ENCODE measurements at regions of chr17 and their contacts with region 1.

Region 1: GRCh38 chr17:48804925-48805411 is 12.1 kb downstream of the TTLL6 start:
- DNase-seq: peak; percentile 44 to 79 (median 58)
- ATAC-seq: peak; percentile 89
- H3K4me3 ChIP-seq: no peak overlapping the region
- H3K4me3 Mint-ChIP-seq: no peak overlapping the region
- H3K27ac ChIP-seq: no peak overlapping the region
- H3K27ac Mint-ChIP-seq: no peak overlapping the region
- H3K4me1 ChIP-seq: peaks cover 4% of the 10 kb centered on the region
- H3K4me1 Mint-ChIP-seq: no peaks in the 10 kb centered on the region
- H3K27me3 ChIP-seq: peaks cover 0 to 8% of the 10 kb centered on the region in 2 experiments
- H3K27me3 Mint-ChIP-seq: peaks cover 23% of the 10 kb centered on the region
- CTCF ChIP-seq: peak; percentile 98

Region 2: GRCh38 chr17:48671697-48672171 is 133.2 kb before region 1 on chr17:
- CTCF ChIA-PET with region 1: interaction called, 3 read pairs
- POLR2A ChIA-PET with region 1: no interaction called
- intact Hi-C with region 1: loop called in 1 of 2 experiments (anchors 5 kb)
- DNase-seq: peak; percentile 59 to 83 (median 65)
- ATAC-seq: peak; percentile 95
- H3K4me3 ChIP-seq: no peak overlapping the region
- H3K4me3 Mint-ChIP-seq: peak overlapping the region; percentile 3
- H3K27ac ChIP-seq: no peak overlapping the region
- H3K27ac Mint-ChIP-seq: no peak overlapping the region
- H3K4me1 ChIP-seq: peaks cover 7% of the 10 kb centered on the region
- H3K4me1 Mint-ChIP-seq: peaks cover 5% of the 10 kb centered on the region
- H3K27me3 ChIP-seq: peaks cover 9 to 13% of the 10 kb centered on the region in 2 experiments
- H3K27me3 Mint-ChIP-seq: peaks cover 73% of the 10 kb centered on the region
- CTCF ChIP-seq: peak; percentile 85

Region 3: DNA sequence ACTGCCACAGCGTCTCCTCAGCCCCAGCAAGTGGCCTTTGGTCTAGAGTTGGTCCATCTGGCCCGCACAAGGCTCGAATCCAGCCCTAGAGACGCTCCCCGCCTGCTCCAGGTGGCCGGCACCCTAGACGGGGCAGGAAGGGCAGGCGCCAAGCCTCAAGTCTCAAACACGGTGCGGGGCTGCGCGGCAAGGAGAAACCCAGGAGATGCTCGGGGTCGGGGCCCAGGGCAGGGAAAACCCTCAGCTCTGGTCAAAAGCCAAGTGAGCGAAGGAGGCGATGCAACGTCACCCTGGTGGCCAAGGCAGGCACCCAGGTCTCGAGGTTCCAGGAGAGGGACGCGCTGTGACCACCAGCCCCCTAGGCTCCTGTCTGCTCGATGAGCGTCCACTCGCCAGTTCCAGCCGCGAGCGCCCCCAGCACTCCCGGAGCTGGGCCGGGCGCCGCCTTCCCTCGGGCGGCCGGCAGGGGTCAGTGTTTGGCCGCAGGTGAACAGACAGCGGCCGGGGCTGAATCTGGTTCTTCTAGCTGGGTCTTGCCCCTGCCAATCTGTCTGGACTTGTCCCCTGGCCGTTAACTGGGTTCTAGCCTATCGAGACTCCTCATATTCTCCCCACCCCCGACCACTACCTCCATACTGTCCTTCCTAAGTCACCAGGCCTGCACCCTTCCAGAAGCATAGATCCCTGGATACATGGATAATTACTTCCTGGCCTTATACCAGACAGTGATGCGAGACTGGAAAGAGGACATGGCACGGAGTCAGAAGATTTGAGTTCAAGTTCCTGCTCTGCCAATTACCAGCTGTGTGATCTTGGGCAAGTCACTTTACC is 126.6 kb before region 1 on chr17:
- CTCF ChIA-PET with region 1: interaction called, 13 read pairs
- POLR2A ChIA-PET with region 1: no interaction called
- intact Hi-C with region 1: loop called in 1 of 2 experiments (anchors 5 kb)
- DNase-seq: peak; percentile 39 to 82 (median 64)
- ATAC-seq: peak; percentile 94
- H3K4me3 ChIP-seq: no peak overlapping the region
- H3K4me3 Mint-ChIP-seq: no peak overlapping the region
- H3K27ac ChIP-seq: no peak overlapping the region
- H3K27ac Mint-ChIP-seq: no peak overlapping the region
- H3K4me1 ChIP-seq: peaks cover 8% of the 10 kb centered on the region
- H3K4me1 Mint-ChIP-seq: no peaks in the 10 kb centered on the region
- H3K27me3 ChIP-seq: peaks cover 12 to 18% of the 10 kb centered on the region in 2 experiments
- H3K27me3 Mint-ChIP-seq: peaks cover 81% of the 10 kb centered on the region
- CTCF ChIP-seq: peak; percentile 98

Region 4: DNA sequence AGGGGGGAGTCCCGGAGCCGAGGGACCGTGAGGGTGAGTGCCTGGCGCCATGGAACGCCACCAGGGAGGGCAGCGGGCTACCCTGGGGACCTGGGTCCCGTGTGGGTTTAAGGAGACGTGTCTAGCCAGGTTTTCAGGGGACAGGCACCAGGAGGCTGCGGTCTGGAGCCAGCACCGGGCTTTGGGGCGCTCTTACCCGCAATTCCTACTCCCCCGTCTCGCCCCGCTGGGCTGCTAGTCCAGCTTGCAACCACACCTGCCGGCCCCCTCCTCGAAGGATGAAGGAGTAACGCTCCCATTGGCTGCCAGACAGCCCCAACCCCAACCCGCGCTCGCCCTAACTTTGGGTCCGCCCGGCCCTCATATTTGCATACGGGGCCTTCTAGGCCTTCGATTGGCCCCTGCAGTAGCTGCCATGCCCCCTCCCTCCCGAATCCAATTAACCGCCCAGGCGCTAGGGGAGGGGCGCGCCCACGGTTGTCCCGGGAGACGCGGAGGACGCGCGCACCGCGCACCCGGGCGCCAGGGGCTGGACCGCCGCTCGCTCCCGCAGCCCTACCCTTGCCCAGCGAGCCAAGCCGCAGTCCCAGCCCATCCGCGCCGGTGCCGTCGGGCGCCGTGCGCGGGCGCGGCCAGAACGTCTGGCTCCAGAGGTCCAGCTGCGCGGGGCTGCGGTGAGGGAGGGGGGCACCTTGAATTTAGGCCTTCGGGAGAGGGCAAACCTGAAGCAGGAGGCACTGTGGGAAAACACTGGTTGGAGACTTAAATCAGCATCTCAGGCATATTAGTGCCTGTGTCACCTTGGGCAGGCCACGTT is 12.0 kb after region 1 on chr17 and contains the start of gene TTLL6:
- CTCF ChIA-PET with region 1: interaction called, 10 read pairs
- POLR2A ChIA-PET with region 1: no interaction called
- intact Hi-C with region 1: no loop called
- DNase-seq: peak; percentile 56 to 91 (median 78)
- ATAC-seq: peak; percentile 98
- H3K4me3 ChIP-seq: peak within 1 kb of the TSS; percentile 50
- H3K4me3 Mint-ChIP-seq: peak within 1 kb of the TSS; percentile 87
- H3K27ac ChIP-seq: no peak within 1 kb of the TSS
- H3K27ac Mint-ChIP-seq: no peak within 1 kb of the TSS
- H3K4me1 ChIP-seq: peaks cover 22% of the 10 kb centered on the region
- H3K4me1 Mint-ChIP-seq: peaks cover 22% of the 10 kb centered on the region
- H3K27me3 ChIP-seq: peaks cover 16 to 32% of the 10 kb centered on the region in 2 experiments
- H3K27me3 Mint-ChIP-seq: peaks cover 71% of the 10 kb centered on the region
- CTCF ChIP-seq: no peak
- total RNA-seq, gene TTLL6: not detected

Measured in CD4-positive, alpha-beta T cell (primary cell).